ENCODE measurements at regions of chr22 and their contacts with region 1.

Region 1: GRCh38 chr22:37049224-37049623 is 2.3 kb upstream of the KCTD17 start:
- DNase-seq: no peak
- ATAC-seq: no peak
- H3K4me3 ChIP-seq: no peak overlapping the region
- H3K27ac ChIP-seq: no peak overlapping the region
- H3K4me1 ChIP-seq: no peaks in the 10 kb centered on the region
- H3K27me3 ChIP-seq: no peaks in the 10 kb centered on the region
- CTCF ChIP-seq: no peak

Region 2: GRCh38 chr22:37148742-37149665 is 99.8 kb after region 1 on chr22:
- CTCF ChIA-PET with region 1: no interaction called
- POLR2A ChIA-PET with region 1: no interaction called
- in situ Hi-C with region 1: no loop called
- intact Hi-C with region 1: no loop called
- DNase-seq: no peak
- ATAC-seq: no peak
- H3K4me3 ChIP-seq: no peak overlapping the region
- H3K27ac ChIP-seq: no peak overlapping the region
- H3K4me1 ChIP-seq: peaks cover 3% of the 10 kb centered on the region
- H3K27me3 ChIP-seq: no peaks in the 10 kb centered on the region
- CTCF ChIP-seq: no peak

Region 3: GRCh38 chr22:38811241-38811640 is 1762.0 kb after region 1 on chr22:
- CTCF ChIA-PET with region 1: no interaction called
- POLR2A ChIA-PET with region 1: interaction called, 19 read pairs
- in situ Hi-C with region 1: no loop called
- intact Hi-C with region 1: no loop called
- DNase-seq: no peak
- ATAC-seq: no peak
- H3K4me3 ChIP-seq: no peak overlapping the region
- H3K27ac ChIP-seq: no peak overlapping the region
- H3K4me1 ChIP-seq: no peaks in the 10 kb centered on the region
- H3K27me3 ChIP-seq: no peaks in the 10 kb centered on the region
- CTCF ChIP-seq: no peak

Measured in Panc1 (cell line).